ENCODE measurements at regions of chr17 and their contacts with region 1.

Region 1: GRCh38 chr17:42760652-42761581 is at the start of gene RAMP2:
- DNase-seq: no peak
- H3K4me3 ChIP-seq: peak within 1 kb of the TSS; percentile 49
- H3K27ac ChIP-seq: no peak within 1 kb of the TSS
- H3K27me3 ChIP-seq: peaks cover 34% of the 10 kb centered on the region
- CTCF ChIP-seq: no peak
- polyA plus RNA-seq, gene RAMP2: 1.4 and 1.7 TPM in 2 replicates

Region 2: GRCh38 chr17:42329025-42329976 is 431.6 kb before region 1 on chr17:
- CTCF ChIA-PET with region 1: no interaction called
- POLR2A ChIA-PET with region 1: no interaction called
- DNase-seq: peak; percentile 27
- H3K4me3 ChIP-seq: no peak overlapping the region
- H3K27ac ChIP-seq: peak overlapping the region; percentile 89
- H3K27me3 ChIP-seq: no peaks in the 10 kb centered on the region
- CTCF ChIP-seq: no peak

Region 3: GRCh38 chr17:42577532-42578281 is 183.2 kb before region 1 on chr17 and contains the start of gene PSMC3IP:
- CTCF ChIA-PET with region 1: interaction called, 24 read pairs
- POLR2A ChIA-PET with region 1: no interaction called
- DNase-seq: peak; percentile 78
- H3K4me3 ChIP-seq: peak within 1 kb of the TSS; percentile 90
- H3K27ac ChIP-seq: peak within 1 kb of the TSS; percentile 73
- H3K27me3 ChIP-seq: no peaks in the 10 kb centered on the region
- CTCF ChIP-seq: peak; percentile 46
- polyA plus RNA-seq, gene PSMC3IP: 3.0 and 5.1 TPM in 2 replicates

Region 4: GRCh38 chr17:42720996-42721583 is 39.8 kb before region 1 on chr17:
- CTCF ChIA-PET with region 1: interaction called, 23 read pairs
- POLR2A ChIA-PET with region 1: no interaction called
- DNase-seq: peak; percentile 46
- H3K4me3 ChIP-seq: no peak overlapping the region
- H3K27ac ChIP-seq: no peak overlapping the region
- H3K27me3 ChIP-seq: no peaks in the 10 kb centered on the region
- CTCF ChIP-seq: peak; percentile 67

Region 5: GRCh38 chr17:42740699-42741098 is 20.2 kb before region 1 on chr17:
- CTCF ChIA-PET with region 1: interaction called, 10 read pairs
- POLR2A ChIA-PET with region 1: no interaction called
- DNase-seq: no peak
- H3K4me3 ChIP-seq: no peak overlapping the region
- H3K27ac ChIP-seq: no peak overlapping the region
- H3K27me3 ChIP-seq: no peaks in the 10 kb centered on the region
- CTCF ChIP-seq: no peak

Region 6: DNA sequence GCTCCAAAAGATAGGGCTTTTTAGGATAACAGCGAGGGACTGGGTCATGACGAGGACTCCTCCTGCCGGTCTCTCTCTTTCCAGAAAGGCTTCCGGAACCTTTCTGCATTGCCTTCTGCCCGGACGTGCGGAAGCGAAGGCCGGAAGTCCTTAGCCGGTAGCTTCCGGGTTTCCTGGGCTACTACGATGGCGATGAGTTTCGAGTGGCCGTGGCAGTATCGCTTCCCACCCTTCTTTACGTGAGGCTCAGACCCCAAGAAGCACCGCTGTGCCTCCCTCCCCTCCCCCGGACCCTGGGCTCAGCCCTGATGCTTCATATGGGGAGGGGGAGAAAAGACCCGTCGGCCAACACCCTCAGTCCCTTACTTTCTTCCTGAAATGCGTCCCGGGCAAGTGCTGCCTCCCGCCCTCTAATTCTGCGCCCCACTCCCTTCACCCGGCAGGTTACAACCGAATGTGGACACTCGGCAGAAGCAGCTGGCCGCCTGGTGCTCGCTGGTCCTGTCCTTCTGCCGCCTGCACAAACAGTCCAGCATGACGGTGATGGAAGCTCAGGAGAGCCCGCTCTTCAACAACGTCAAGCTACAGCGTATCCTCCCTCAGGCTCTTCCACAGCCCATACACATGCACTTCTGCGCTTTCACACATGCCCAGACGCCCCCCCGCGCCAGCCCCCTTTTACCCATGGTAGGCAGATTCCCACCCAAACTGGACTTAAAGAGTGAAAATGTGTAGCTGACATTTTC is 12.5 kb after region 1 on chr17 and contains the start of gene VPS25:
- CTCF ChIA-PET with region 1: interaction called, 39 read pairs
- POLR2A ChIA-PET with region 1: interaction called, 7 read pairs
- DNase-seq: peak; percentile 55
- H3K4me3 ChIP-seq: peak within 1 kb of the TSS; percentile 97
- H3K27ac ChIP-seq: peak within 1 kb of the TSS; percentile 85
- H3K27me3 ChIP-seq: no peaks in the 10 kb centered on the region
- CTCF ChIP-seq: peak; percentile 30
- polyA plus RNA-seq, gene VPS25: 94.0 and 107 TPM in 2 replicates

Region 7: GRCh38 chr17:42906772-42907446 is 146.0 kb after region 1 on chr17:
- CTCF ChIA-PET with region 1: no interaction called
- POLR2A ChIA-PET with region 1: no interaction called
- DNase-seq: no peak
- H3K4me3 ChIP-seq: no peak overlapping the region
- H3K27ac ChIP-seq: no peak overlapping the region
- H3K27me3 ChIP-seq: peaks cover 37% of the 10 kb centered on the region
- CTCF ChIP-seq: no peak

Region 8: DNA sequence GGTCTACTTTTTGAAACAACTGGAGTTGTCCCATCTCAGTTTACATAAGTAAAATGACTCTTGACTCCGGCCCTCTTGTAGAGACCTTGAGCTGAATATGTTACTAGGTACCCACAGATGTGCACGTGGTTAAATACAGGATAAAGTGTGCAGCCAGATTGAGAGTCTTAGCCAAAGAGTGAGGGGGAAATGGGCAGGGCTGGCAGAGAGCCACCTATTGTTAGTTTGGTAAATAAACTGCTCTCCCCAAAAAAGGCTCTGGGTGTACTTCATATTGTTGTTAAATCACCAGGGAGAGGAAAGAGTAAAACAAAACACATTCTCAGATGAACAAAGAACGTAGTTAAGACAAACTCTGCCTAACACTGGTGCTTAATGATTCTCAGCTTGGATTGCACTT is 160.0 kb after region 1 on chr17:
- CTCF ChIA-PET with region 1: no interaction called
- POLR2A ChIA-PET with region 1: no interaction called
- DNase-seq: no peak
- H3K4me3 ChIP-seq: no peak overlapping the region
- H3K27ac ChIP-seq: no peak overlapping the region
- H3K27me3 ChIP-seq: peaks cover 21% of the 10 kb centered on the region
- CTCF ChIP-seq: no peak

Measured in AG04450 (cell line).